WTC11 (cell line): ENCODE measurements at regions of chr11 and their contacts with region 1.

Region 1: GRCh38 chr11:74929431-74930363 is 19.2 kb downstream of the XRRA1 start:
- DNase-seq: peak; percentile 53
- ATAC-seq: peak; percentile 95
- H3K4me3 Mint-ChIP-seq: no peak overlapping the region
- H3K27ac Mint-ChIP-seq: no peak overlapping the region
- H3K4me1 Mint-ChIP-seq: no peaks in the 10 kb centered on the region
- H3K27me3 Mint-ChIP-seq: no peaks in the 10 kb centered on the region
- CTCF ChIP-seq: peak; percentile 56; the same call in 1 of the 2 replicates

Region 2: DNA sequence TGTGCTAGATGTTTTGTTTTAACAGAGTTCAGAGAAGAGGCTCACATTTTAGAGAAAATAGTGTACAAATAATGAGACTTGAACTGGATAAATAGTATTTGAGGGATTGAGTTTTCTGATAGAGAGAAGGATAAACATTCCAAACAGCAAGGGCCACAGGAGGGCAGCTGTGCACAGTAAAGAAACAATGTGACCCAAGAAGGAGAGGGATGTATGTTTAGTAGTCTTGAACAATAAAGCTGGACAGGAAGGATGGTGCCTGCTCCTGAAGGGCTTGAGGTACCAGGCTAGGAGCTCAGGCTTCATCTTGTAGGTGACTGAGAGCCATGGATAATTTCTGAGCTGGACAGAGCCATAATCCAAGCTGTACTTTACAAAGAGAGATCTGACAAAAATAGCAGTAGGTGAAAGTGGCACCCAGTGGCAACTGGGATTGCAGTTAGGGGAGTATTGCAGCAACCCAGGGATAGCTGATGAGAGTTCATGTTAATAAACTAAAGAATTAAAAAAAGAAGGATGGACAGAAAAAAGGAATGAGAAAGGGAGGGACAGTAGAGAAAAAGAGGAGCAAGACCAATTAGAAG is 11.7 kb after region 1 on chr11:
- CTCF ChIA-PET with region 1: interaction called, 12 read pairs
- POLR2A ChIA-PET with region 1: no interaction called
- DNase-seq: no peak
- ATAC-seq: no peak
- H3K4me3 Mint-ChIP-seq: no peak overlapping the region
- H3K27ac Mint-ChIP-seq: no peak overlapping the region
- H3K4me1 Mint-ChIP-seq: no peaks in the 10 kb centered on the region
- H3K27me3 Mint-ChIP-seq: no peaks in the 10 kb centered on the region
- CTCF ChIP-seq: no peak

Region 3: DNA sequence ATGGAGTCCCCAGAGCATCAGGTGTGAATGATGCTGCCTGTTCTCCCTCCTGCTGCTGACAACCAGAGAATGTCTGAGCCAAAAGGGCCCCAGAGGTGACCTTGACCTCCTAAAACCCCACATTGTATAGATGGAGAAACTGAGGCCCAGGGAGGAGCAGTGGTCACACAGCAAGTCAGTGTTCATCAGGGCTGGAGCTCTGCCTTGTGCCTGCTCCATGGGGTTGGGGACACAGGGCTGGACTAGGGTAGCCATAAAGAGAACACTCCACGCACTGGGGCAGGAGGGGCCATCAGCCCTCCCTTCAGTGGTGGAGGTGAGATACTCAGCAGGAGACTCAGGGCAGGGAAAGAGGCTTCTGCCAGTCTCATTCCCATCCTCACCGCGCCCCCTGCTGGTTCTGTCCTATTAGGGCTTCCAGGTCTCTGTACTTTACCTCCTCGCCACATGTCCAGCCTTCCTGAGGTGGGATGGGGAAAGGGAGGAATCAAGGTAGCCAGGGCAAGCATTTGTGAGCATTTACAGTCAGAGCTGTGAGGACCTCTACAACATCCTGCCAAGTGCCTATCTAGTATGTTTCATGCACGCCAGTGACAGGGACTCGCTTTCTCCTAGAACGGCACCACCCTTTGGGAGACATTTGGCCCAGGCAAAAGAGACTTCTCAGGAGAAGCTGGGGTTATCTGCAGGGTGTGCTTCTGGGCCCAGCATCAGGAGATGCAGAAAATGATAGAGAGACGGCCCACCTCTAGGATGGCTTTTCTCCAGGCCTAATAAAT is 102.3 kb after region 1 on chr11:
- CTCF ChIA-PET with region 1: interaction called, 11 read pairs
- POLR2A ChIA-PET with region 1: no interaction called
- DNase-seq: peak; percentile 89
- ATAC-seq: peak; percentile 91
- H3K4me3 Mint-ChIP-seq: no peak overlapping the region
- H3K27ac Mint-ChIP-seq: no peak overlapping the region
- H3K4me1 Mint-ChIP-seq: 0 out of 2 replicates have a peak, but pooled peaks cover 5% of the 10 kb centered on the region
- H3K27me3 Mint-ChIP-seq: no peaks in the 10 kb centered on the region; the same call in 1 of the 2 replicates
- CTCF ChIP-seq: peak; percentile 82